Natural killer cell (primary cell): ENCODE measurements at regions of chr6 and their contacts with region 1.

Region 1: GRCh38 chr6:165884813-165885765 is 222.0 kb upstream of the PDE10A start:
- DNase-seq: peak; percentile 36 to 69
- ATAC-seq: peak; percentile 70 to 97 (median 73)
- H3K4me3 ChIP-seq: no peak overlapping the region
- H3K4me3 Mint-ChIP-seq: peak overlapping the region; percentile 61
- H3K27ac ChIP-seq: no peak overlapping the region
- H3K27ac Mint-ChIP-seq: peak overlapping the region in 1 of 2 donors; percentile 41
- H3K4me1 ChIP-seq: peaks cover 6% of the 10 kb centered on the region
- H3K4me1 Mint-ChIP-seq: peaks cover 10% of the 10 kb centered on the region in 2 donors
- H3K27me3 ChIP-seq: no peaks in the 10 kb centered on the region
- H3K27me3 Mint-ChIP-seq: peaks cover 10% of the 10 kb centered on the region in 2 donors
- CTCF ChIP-seq: peak; percentile 62

Region 2: DNA sequence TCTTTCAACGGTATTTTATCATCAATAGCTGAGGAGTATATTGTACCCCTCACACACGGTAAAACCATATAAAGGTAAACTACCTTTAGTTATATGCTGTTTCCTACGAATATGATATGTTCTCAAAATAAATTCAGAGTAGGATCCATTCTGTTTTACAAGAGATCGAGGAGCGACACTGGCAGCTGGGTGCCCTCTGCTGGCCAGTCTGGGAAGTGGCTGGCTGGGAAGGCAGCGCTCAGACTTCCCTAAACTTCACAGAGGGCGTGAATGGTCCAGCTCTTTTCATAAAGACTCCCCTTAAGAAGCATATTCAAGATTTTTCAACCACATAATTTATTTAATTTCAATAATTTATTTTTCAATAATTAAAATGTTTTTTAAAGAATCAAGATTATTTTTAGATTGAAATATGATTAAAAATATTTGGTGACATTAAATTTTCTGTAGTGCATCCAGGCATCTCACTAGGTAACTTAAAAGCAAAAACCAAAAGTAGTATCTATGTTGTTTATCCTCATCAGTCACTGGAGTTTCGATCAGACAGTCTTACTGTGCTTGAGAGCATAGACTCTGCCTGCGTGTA is 34.6 kb before region 1 on chr6:
- intact Hi-C with region 1: no loop called
- DNase-seq: peak; percentile 39 to 62
- ATAC-seq: peak; percentile 60 to 92 (median 75)
- H3K4me3 ChIP-seq: no peak overlapping the region
- H3K4me3 Mint-ChIP-seq: no peak overlapping the region
- H3K27ac ChIP-seq: no peak overlapping the region
- H3K27ac Mint-ChIP-seq: no peak overlapping the region
- H3K4me1 ChIP-seq: peaks cover 4% of the 10 kb centered on the region
- H3K4me1 Mint-ChIP-seq: peaks cover 13 to 14% of the 10 kb centered on the region in 2 donors
- H3K27me3 ChIP-seq: peaks cover 17% of the 10 kb centered on the region
- H3K27me3 Mint-ChIP-seq: peaks cover 39 to 74% of the 10 kb centered on the region in 2 donors
- CTCF ChIP-seq: peak; percentile 93

Region 3: DNA sequence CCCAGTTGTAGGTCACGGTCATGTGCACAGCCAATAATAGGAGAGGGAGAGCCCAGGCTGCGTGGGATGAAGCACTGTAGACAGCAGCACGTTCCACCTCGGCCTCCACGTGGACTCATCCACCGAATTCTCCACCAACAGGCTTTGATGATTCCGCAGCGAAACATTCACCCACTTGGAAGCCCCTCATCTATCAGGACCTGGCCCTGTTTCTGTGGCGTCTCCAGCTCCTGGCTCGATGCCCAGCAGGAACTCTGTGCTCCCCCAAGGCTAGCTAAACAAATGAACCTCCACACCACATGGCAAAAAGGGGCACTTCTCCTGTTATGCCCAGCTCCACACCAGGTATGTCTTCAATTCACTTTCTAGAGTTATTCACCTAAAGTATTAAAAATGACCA is 15.9 kb after region 1 on chr6:
- intact Hi-C with region 1: no loop called
- DNase-seq: no peak
- ATAC-seq: no peak
- H3K4me3 ChIP-seq: no peak overlapping the region
- H3K4me3 Mint-ChIP-seq: no peak overlapping the region
- H3K27ac ChIP-seq: no peak overlapping the region
- H3K27ac Mint-ChIP-seq: no peak overlapping the region
- H3K4me1 ChIP-seq: no peaks in the 10 kb centered on the region
- H3K4me1 Mint-ChIP-seq: no peaks in the 10 kb centered on the region
- H3K27me3 ChIP-seq: no peaks in the 10 kb centered on the region
- H3K27me3 Mint-ChIP-seq: peaks cover 14 to 16% of the 10 kb centered on the region in 2 donors
- CTCF ChIP-seq: no peak

Region 4: GRCh38 chr6:166032366-166033171 is 147.5 kb after region 1 on chr6:
- intact Hi-C with region 1: no loop called
- DNase-seq: no peak
- ATAC-seq: peak in 2 of 3 donors; percentile 29 to 39
- H3K4me3 ChIP-seq: no peak overlapping the region
- H3K4me3 Mint-ChIP-seq: no peak overlapping the region
- H3K27ac ChIP-seq: no peak overlapping the region
- H3K27ac Mint-ChIP-seq: no peak overlapping the region
- H3K4me1 ChIP-seq: no peaks in the 10 kb centered on the region
- H3K4me1 Mint-ChIP-seq: no peaks in the 10 kb centered on the region
- H3K27me3 ChIP-seq: no peaks in the 10 kb centered on the region
- H3K27me3 Mint-ChIP-seq: peaks cover 0 to 3% of the 10 kb centered on the region in 2 donors
- CTCF ChIP-seq: no peak

Region 5: DNA sequence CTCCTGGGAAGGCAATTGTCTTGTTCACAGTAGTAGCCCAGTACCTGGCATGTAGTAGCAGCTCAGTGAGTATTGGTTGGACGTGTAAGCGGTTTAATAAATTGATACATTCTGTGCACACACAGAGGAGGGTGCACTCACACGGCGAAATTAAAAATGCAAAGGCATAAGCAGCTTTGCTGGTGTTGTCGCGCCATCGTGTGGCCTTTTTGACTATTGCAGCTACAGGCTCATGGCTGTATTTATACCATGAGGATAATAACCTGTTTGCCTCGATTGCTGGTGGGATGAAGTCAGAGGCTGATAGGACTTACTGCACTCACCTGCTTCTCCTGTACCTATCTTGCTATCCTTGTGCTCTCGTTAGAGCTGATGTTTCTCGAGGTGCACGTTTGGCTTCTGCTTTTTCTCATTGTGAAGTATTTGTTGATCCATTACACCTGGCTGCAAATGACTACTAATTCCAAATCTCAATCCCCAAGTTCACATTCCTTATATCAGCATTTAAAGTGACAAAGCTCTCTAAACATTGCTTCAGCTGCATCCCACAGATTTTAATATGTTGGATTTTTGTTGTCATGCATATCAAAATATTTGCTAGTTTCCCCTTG is 221.1 kb after region 1 on chr6:
- intact Hi-C with region 1: loop called (anchors 1 kb)
- DNase-seq: peak; percentile 31 to 56
- ATAC-seq: peak; percentile 45 to 75 (median 61)
- H3K4me3 ChIP-seq: no peak overlapping the region
- H3K4me3 Mint-ChIP-seq: no peak overlapping the region
- H3K27ac ChIP-seq: no peak overlapping the region
- H3K27ac Mint-ChIP-seq: no peak overlapping the region
- H3K4me1 ChIP-seq: no peaks in the 10 kb centered on the region
- H3K4me1 Mint-ChIP-seq: peaks cover 6 to 7% of the 10 kb centered on the region in 2 donors
- H3K27me3 ChIP-seq: peaks cover 14% of the 10 kb centered on the region
- H3K27me3 Mint-ChIP-seq: peaks cover 31 to 46% of the 10 kb centered on the region in 2 donors
- CTCF ChIP-seq: peak; percentile 72